ENCODE measurements at regions of chr12 and their contacts with region 1.

Region 1: GRCh38 chr12:123580772-123581171 is 3.6 kb upstream of the TMED2 start:
- DNase-seq: no peak
- ATAC-seq: no peak

Region 2: GRCh38 chr12:123540899-123541662 is 39.7 kb before region 1 on chr12:
- intact Hi-C with region 1: loop called (anchors 5 kb)
- DNase-seq: peak; percentile 9
- ATAC-seq: no peak

Measured in Right ventricle myocardium superior (tissue), 1 donor.